WTC11 (cell line): ENCODE measurements at regions of chr3 and their contacts with region 1.

Region 1: GRCh38 chr3:149536429-149536828 is 61.9 kb downstream of the TM4SF4 start:
- DNase-seq: peak; percentile 74
- ATAC-seq: peak; percentile 82
- H3K4me3 Mint-ChIP-seq: 0 out of 2 replicates have a peak overlapping the region, but pooled peaks have one; percentile 19
- H3K27ac Mint-ChIP-seq: no peak overlapping the region
- H3K4me1 Mint-ChIP-seq: peaks cover 51% of the 10 kb centered on the region
- H3K27me3 Mint-ChIP-seq: no peaks in the 10 kb centered on the region
- CTCF ChIP-seq: no peak

Region 2: GRCh38 chr3:149523512-149524299 is 12.7 kb before region 1 on chr3:
- CTCF ChIA-PET with region 1: no interaction called
- POLR2A ChIA-PET with region 1: no interaction called
- DNase-seq: no peak
- ATAC-seq: no peak
- H3K4me3 Mint-ChIP-seq: no peak overlapping the region
- H3K27ac Mint-ChIP-seq: no peak overlapping the region
- H3K4me1 Mint-ChIP-seq: peaks cover 10% of the 10 kb centered on the region
- H3K27me3 Mint-ChIP-seq: no peaks in the 10 kb centered on the region
- CTCF ChIP-seq: no peak

Region 3: GRCh38 chr3:149566292-149566975 is 30.0 kb after region 1 on chr3:
- CTCF ChIA-PET with region 1: interaction called, 14 read pairs
- POLR2A ChIA-PET with region 1: no interaction called
- DNase-seq: no peak
- ATAC-seq: no peak
- H3K4me3 Mint-ChIP-seq: no peak overlapping the region
- H3K27ac Mint-ChIP-seq: peak overlapping the region; percentile 61
- H3K4me1 Mint-ChIP-seq: peaks cover 31% of the 10 kb centered on the region
- H3K27me3 Mint-ChIP-seq: no peaks in the 10 kb centered on the region
- CTCF ChIP-seq: no peak

Region 4: GRCh38 chr3:149765762-149766334 is 229.4 kb after region 1 on chr3:
- CTCF ChIA-PET with region 1: interaction called, 12 read pairs
- POLR2A ChIA-PET with region 1: no interaction called
- DNase-seq: no peak
- ATAC-seq: peak; percentile 36; the same call in 1 of the 2 replicates
- H3K4me3 Mint-ChIP-seq: no peak overlapping the region
- H3K27ac Mint-ChIP-seq: no peak overlapping the region
- H3K4me1 Mint-ChIP-seq: no peaks in the 10 kb centered on the region
- H3K27me3 Mint-ChIP-seq: no peaks in the 10 kb centered on the region; the same call in none of the 2 replicates
- CTCF ChIP-seq: no peak